Pancreas (tissue), 10 donors: ENCODE measurements at regions of chr17 and their contacts with region 1.

Region 1: GRCh38 chr17:81142301-81143199 is 22.8 kb upstream of the PVALEF start:
- DNase-seq: peak in 5 of 6 donors; percentile 73 to 90 (median 82)
- ATAC-seq: peak; percentile 92 to 97 (median 96)
- H3K4me3 ChIP-seq: no peak overlapping the region
- H3K27ac ChIP-seq: no peak overlapping the region
- H3K4me1 ChIP-seq: peaks cover 0 to 3% (median 0%) of the 10 kb centered on the region in 3 donors
- H3K27me3 ChIP-seq: no peaks in the 10 kb centered on the region
- CTCF ChIP-seq: peak; percentile 46 to 68 (median 64)

Region 2: DNA sequence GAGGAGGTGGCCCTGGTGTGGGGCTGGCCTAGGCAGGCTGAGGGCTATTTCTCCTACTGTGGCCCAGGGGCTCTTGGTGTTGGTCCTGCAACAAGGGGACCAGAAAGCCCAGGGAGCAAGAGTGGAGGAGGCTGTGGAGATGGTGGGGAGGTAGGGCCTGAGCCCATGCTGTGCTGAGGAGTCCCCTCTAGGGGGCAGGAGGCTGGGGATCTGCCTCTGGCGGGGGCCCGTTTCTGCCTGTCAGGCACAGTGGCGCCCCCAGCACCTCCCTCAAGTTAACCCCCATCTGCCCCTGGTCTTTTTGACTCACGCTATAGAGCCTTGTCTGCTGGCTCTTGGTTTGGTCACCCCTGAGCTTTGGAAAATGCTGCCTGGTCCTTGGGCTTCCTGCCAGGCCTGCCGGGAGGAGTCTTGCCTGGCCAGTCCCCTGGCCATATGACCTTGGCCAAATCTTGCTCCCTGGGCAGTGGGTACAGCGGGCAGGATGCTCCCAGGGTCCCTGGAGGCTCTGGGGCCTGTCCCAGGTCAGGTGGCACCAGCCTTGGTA is 101.7 kb before region 1 on chr17:
- intact Hi-C with region 1: no loop called
- DNase-seq: peak in 2 of 6 donors; percentile 51 to 58
- ATAC-seq: no peak
- H3K4me3 ChIP-seq: no peak overlapping the region
- H3K27ac ChIP-seq: no peak overlapping the region
- H3K4me1 ChIP-seq: peaks cover 11 to 28% (median 27%) of the 10 kb centered on the region in 3 donors
- H3K27me3 ChIP-seq: no peaks in the 10 kb centered on the region
- CTCF ChIP-seq: peak in 1 of 4 donors; percentile 8

Region 3: GRCh38 chr17:81090361-81091136 is 52.0 kb before region 1 on chr17:
- intact Hi-C with region 1: no loop called
- DNase-seq: no peak
- ATAC-seq: no peak
- H3K4me3 ChIP-seq: no peak overlapping the region
- H3K27ac ChIP-seq: no peak overlapping the region
- H3K4me1 ChIP-seq: peaks cover 0 to 2% (median 0%) of the 10 kb centered on the region in 3 donors
- H3K27me3 ChIP-seq: no peaks in the 10 kb centered on the region
- CTCF ChIP-seq: no peak

Region 4: DNA sequence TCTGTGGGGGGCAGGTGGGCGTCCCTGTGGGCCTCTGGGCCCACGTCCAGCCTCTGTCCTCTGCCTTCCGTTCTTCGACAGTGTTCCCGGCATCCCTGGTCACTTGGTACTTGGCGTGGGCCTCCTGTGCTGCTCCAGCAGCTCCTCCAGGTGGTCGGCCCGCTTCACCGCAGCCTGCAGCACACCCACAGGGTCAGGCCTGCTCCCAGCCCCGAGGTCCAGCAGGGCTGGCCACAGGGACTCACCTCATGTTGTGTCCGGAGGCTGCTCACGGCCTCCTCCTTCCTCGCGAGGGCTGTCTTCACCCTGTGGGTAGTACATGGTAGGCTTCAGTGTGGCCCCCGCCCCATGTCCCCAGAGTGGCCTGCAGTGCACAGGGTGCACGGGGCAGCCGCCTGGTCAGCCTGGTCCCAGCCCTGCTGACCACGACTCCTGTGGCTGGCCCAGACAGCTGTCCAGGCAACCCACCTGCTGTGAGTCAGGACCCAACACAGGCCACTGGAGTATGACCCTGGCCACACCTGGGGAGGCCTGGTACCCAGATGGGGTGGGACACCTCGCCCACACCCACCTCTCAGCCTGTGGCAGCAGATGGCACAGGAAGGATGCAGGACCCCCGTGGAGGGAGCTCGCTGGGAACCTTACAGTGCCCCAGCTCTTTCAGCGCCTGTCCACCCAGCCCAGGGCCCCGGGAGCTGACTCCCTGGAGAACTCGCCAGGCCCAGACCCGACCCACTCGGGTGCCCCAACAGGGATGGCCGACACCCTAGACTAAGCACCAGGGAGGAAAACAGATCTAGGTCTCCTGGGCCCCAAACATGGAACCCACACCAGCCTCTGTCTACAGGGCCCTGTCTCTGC is 47.4 kb after region 1 on chr17:
- intact Hi-C with region 1: loop called in 1 of 3 experiments (anchors 5 kb)
- DNase-seq: peak in 2 of 6 donors; percentile 33 to 77
- ATAC-seq: peak in 3 of 4 donors; percentile 54 to 88 (median 71)
- H3K4me3 ChIP-seq: no peak overlapping the region
- H3K27ac ChIP-seq: no peak overlapping the region
- H3K4me1 ChIP-seq: no peaks in the 10 kb centered on the region
- H3K27me3 ChIP-seq: no peaks in the 10 kb centered on the region
- CTCF ChIP-seq: no peak

Region 5: DNA sequence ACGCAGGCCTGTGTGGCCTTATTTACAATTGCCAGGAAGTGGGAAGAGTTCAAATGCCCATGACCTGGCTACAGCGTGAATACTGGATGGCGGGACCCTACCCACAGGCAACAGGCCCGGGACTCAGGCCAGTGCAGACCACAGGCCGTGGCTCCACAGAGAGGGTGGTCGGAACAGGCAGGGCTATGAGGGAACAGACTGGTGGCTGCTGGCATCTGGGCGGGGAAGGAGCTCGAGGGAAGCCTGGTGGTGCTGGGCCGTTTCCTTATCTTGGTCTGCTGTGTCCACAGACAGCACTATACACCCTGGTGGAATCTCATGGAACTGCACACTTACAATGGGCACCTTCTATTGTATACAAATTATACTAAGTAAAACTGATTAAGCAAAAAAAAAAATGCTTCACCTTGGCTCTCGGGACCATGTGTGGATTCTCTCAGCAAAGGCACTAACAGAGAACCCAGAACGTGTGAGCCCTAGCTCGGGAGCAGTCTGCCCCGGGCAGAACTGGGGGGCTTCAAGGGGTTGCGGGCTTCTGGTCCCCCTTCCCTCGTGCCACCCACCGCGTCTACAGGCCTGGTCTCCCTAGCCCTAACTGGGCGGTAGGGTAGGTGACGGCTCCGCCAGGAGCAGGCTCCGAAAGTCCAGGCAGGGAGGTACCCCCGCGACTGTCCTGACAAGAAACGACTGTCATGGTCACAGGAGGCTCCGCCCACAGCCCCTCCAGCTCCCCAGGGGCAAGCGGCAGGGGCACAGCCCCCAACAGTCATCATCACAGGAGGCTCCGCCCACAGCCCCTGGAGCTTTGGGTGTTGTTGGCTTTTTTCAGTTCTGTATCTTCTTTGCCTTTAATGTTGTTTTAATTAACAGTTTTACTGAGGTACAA is 58.4 kb after region 1 on chr17:
- intact Hi-C with region 1: loop called in 1 of 3 experiments (anchors 5 kb)
- DNase-seq: peak in 5 of 6 donors; percentile 69 to 81 (median 77)
- ATAC-seq: peak; percentile 94 to 99 (median 96)
- H3K4me3 ChIP-seq: no peak overlapping the region
- H3K27ac ChIP-seq: no peak overlapping the region
- H3K4me1 ChIP-seq: no peaks in the 10 kb centered on the region
- H3K27me3 ChIP-seq: no peaks in the 10 kb centered on the region
- CTCF ChIP-seq: peak; percentile 60 to 73 (median 70)

Region 6: DNA sequence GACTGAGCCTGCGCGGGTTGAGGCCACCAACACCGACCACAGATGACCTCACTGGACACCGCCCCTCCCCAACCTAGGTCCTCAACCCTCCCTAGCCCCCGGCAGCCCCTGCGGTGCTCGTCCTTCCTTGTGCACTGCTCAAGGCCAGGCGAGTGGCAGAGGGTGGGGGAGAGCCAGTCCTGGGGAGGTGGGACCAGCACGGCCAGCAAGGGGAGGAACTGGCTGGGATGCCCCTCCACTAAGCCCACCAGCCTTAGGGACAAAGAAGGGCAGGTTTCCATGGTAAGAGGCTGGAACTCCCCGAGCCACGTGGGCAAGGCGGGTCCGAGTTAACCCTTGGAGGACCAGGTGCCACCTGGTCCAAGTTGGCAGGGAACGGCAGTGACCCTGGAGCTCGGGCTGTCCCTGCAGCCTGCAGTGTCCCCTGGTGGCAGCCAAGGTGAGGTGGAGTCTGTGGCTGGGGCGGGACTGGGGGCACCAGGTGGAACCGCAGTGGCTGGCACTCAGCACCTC is 394.8 kb after region 1 on chr17:
- intact Hi-C with region 1: loop called in 1 of 3 experiments (anchors 5 kb)
- DNase-seq: peak; percentile 78 to 95 (median 86)
- ATAC-seq: peak; percentile 60 to 81 (median 76)
- H3K4me3 ChIP-seq: peak overlapping the region; percentile 1 to 58 (median 26)
- H3K27ac ChIP-seq: peak overlapping the region; percentile 58 to 85 (median 73)
- H3K4me1 ChIP-seq: peaks cover 0 to 17% (median 0%) of the 10 kb centered on the region in 3 donors
- H3K27me3 ChIP-seq: no peaks in the 10 kb centered on the region
- CTCF ChIP-seq: peak; percentile 66 to 85 (median 69)